ENCODE measurements at regions of chr19 and their contacts with region 1.

Region 1: DNA sequence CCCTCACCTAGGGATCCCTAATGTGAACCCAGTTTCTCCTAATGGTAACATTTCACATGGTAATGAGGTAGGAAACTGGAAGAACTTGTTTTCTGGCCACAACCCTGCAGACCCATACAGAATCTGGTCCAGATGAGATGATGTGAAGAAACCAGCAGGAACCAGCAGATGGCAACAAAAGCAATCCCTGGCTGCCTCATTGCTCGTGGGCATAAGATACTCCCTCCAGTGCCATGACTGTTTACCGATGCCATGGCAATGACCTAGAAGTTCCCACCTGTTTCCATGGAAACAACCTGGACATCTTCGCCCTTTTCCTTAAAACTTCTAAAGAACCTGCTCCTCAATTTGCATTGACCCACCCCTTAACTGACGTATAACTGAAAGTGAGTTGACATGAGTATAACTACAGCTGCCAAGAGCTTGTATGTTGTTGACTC is 1.5 kb upstream of the CD209 start:
- DNase-seq: no peak
- H3K4me3 ChIP-seq: no peak overlapping the region
- H3K27ac ChIP-seq: no peak overlapping the region
- H3K4me1 ChIP-seq: no peaks in the 10 kb centered on the region
- H3K27me3 ChIP-seq: no peaks in the 10 kb centered on the region
- CTCF ChIP-seq: no peak
- EP300 ChIP-seq: no peak
- POLR2A ChIP-seq: no peak

Region 2: DNA sequence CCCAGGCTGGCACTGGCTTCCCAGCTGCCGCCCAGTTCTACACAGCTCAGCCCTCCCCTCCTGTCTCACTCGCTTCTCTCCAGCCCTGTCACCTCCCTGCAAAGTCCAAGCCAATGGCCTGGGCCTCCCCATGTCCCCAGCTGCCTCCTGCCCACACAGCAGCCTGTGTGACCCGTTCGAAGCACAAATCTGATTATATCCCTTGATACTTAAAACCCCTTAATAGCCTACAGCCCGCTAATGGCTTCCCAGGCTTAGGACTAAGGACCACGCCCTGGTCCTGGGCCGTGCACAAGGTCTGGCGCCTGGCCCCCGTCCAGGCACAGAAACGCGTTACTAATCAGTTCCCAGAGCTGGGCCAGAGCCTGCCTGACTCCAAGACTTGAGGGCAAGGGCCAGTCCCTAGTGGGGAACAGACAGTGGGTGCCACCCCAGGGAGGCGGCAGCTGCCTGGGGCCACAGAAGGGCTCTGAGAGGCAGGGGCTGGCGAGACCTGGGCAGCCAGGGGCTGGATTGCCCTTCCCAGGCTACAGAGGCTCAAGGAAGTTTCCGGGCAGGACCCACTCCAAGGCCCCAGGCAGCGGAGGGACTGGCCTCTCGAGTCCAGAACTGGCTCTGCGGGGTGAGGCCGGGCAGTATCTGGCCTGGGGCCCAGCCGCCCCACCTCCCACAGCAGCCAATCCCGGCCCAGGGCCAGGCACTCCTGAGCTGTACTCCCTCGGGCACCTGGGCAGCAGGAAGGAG is 129.8 kb before region 1 on chr19:
- intact Hi-C with region 1: no loop called
- DNase-seq: peak in 1 of 5 donors; percentile 58
- H3K4me3 ChIP-seq: no peak overlapping the region
- H3K27ac ChIP-seq: no peak overlapping the region
- H3K4me1 ChIP-seq: no peaks in the 10 kb centered on the region
- H3K27me3 ChIP-seq: no peaks in the 10 kb centered on the region
- CTCF ChIP-seq: no peak
- EP300 ChIP-seq: no peak
- POLR2A ChIP-seq: no peak

Region 3: GRCh38 chr19:7734220-7735203 is 14.3 kb before region 1 on chr19:
- intact Hi-C with region 1: loop called in 1 of 4 experiments (anchors 1 kb)
- DNase-seq: peak in 1 of 5 donors; percentile 16
- H3K4me3 ChIP-seq: no peak overlapping the region
- H3K27ac ChIP-seq: no peak overlapping the region
- H3K4me1 ChIP-seq: no peaks in the 10 kb centered on the region
- H3K27me3 ChIP-seq: no peaks in the 10 kb centered on the region
- CTCF ChIP-seq: no peak
- EP300 ChIP-seq: no peak
- POLR2A ChIP-seq: no peak

Region 4: DNA sequence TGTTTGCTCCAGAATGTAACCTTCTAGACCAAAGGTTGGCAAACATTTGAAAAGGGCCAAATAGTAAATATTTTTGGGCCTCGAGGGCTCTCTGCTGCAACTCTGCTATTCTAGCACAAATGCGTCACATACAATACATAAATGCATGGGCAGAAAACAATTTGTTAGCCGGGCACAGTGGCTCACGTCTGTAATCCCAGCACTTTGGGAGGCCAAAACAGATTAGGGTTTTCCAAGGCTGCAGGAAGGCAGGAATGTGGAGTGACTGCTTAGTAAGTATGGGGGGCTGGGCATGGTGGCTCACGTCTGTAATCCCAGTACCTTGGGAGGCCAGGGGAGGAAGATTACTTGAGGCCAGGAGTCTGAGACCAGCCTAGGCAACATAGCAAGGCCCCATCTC is 59.3 kb after region 1 on chr19:
- intact Hi-C with region 1: no loop called
- DNase-seq: no peak
- H3K4me3 ChIP-seq: no peak overlapping the region
- H3K27ac ChIP-seq: no peak overlapping the region
- H3K4me1 ChIP-seq: no peaks in the 10 kb centered on the region
- H3K27me3 ChIP-seq: no peaks in the 10 kb centered on the region
- CTCF ChIP-seq: no peak
- EP300 ChIP-seq: no peak
- POLR2A ChIP-seq: no peak

Region 5: DNA sequence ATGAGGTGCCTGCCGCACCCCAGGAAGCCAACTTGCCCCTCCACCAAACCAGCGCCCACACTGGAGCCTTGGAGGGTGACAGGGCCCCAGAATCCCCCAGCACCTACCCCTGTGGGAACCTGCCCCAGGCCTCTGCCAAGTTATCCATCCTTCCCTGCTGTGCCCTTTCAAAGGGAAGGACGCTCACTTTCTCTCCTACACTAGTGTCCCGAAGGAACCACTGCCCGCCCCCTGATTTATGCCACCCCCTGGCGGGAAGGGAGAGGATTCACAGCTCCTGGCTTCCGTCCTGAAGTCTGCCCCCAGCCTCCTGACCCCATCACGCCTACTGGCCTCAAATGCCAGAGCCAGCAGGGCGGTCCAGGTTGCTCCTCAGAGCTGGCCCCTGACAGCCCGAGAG is 82.7 kb after region 1 on chr19:
- intact Hi-C with region 1: no loop called
- DNase-seq: peak in 3 of 5 donors; percentile 19 to 47 (median 35)
- H3K4me3 ChIP-seq: no peak overlapping the region
- H3K27ac ChIP-seq: no peak overlapping the region
- H3K4me1 ChIP-seq: peaks cover 16% of the 10 kb centered on the region
- H3K27me3 ChIP-seq: no peaks in the 10 kb centered on the region
- CTCF ChIP-seq: no peak
- EP300 ChIP-seq: no peak
- POLR2A ChIP-seq: no peak